Posterior vena cava (tissue), 2 donors: ENCODE measurements at regions of chr5 and their contacts with region 1.

Region 1: GRCh38 chr5:67301285-67301903 is 104.8 kb upstream of the CD180 start:
- DNase-seq: peak; percentile 93

Region 2: DNA sequence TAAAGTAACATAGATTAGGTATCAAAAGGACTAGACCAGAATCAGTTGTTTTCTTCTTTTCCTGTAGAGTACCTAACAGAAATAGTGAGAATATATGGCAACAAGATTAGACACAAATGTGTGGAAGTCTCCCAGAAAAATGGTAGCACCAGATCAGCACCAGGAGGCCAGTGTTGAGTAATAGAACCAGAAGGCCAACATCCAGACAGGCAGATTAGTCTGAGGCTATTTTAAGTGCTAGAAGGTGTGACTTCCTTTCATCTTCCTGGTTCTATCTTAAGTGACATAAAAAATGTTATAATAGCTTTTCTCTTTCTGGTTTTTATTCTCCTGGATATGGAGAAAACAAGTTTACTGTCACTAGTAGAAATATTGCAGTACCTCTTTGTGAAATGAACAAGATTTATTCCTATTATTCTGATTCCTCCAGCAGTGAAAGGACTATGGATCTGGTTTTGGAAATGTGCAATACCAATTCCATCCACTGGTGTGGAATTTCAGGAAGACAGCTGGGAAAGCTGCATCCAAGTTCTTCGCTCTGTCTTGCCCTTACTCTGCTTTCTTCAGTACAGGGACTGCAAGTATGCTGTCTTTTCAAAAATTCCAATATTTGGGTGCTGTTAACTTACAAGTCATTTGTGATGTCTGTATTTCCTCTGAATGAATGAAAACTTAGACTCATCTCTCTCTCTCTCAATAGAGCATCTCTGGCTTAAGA is 1637.4 kb before region 1 on chr5:
- intact Hi-C with region 1: no loop called
- DNase-seq: no peak

Region 3: GRCh38 chr5:66609615-66610014 is 691.8 kb before region 1 on chr5:
- intact Hi-C with region 1: no loop called
- DNase-seq: no peak

Region 4: GRCh38 chr5:66643387-66643786 is 658.0 kb before region 1 on chr5:
- intact Hi-C with region 1: no loop called
- DNase-seq: no peak

Region 5: GRCh38 chr5:67268231-67269021 is 33.0 kb before region 1 on chr5:
- intact Hi-C with region 1: loop called in 1 of 2 experiments (anchors 1 kb)
- DNase-seq: peak; percentile 86

Region 6: DNA sequence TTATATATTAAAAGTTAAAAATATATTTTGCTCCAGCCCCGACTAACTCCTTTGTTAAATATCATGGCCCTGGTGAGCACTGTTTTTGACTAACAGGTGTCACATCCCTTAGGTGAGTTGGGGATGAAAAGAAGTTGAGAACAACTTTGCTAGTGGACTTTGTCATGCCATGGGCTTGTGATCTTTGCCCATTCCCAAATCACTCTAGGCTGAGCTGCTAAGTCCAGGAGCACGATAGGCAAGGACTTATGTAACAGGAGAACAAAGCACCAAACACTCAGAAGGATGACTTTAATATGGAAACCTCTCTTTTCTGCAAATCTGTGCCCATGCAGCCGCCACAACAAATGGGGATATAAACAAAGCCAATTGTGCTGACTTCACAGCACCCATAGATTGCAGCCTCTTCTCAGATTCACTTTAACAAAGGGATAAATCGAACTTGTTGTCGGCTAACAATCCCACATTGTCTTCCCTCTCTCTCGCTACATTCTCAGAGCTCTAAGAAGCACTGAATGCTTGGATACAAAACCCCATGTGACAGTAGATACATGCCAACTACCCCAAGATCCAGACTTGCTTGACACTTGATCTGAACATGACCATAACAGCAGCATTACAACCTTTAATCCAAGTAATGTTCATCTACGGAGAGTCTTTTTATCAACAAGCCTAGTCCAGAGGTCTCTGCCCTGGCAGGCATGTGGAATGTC is 18.0 kb before region 1 on chr5:
- intact Hi-C with region 1: loop called in 1 of 2 experiments (anchors 1 kb)
- DNase-seq: no peak